Dendritic cell treated with granulocyte-macrophage colony-stimulating factor and Interleukin-4, amounts not matched to agents 40 ng/mL and 50 ng/mL, for 4 days (primary cell): ENCODE measurements at regions of chr3 and their contacts with region 1.

Region 1: GRCh38 chr3:141192345-141192744 is 39.3 kb upstream of the PXYLP1 start:
- H3K4me3 Mint-ChIP-seq: no peak overlapping the region
- H3K27ac Mint-ChIP-seq: no peak overlapping the region
- H3K4me1 Mint-ChIP-seq: peaks cover 10% of the 10 kb centered on the region
- H3K27me3 Mint-ChIP-seq: peaks cover 22% of the 10 kb centered on the region

Region 2: DNA sequence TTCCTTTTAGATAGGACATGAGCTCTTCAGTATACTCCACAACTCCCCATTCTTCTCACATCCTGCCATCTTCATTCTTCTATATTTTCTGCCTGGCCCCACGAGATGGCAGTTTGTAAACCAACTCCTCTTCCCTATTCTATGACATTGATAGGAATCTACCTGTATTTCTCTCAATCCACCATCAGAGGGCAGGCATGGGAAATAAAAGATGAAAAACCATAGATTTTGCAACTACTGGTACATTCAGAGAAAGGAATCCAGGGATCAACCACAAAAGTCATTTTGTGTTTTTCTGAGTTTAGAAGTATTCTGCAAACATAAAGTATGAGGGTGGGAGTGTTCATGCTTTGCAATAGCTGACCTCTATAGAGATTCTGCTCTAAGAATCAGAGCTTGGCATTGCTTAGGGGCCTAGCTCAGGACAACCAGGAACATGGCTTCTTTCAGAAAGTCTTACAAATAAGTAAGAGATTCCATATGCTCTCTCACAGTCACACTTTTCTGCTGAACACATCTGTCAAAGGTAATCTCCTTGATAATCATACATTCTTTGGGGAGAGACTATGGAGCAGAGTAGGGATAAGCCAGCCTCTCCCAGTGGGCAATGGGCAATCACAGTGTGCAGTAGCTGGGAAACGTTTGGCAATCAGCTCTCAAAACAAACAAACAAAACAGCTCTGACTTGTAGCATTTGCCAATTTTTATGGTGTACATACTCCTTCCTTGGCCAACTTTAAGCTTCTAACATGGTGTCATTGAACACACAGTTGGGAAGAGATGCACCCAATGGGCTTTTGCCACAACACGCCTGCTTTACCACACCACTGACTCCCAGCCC is 293.8 kb before region 1 on chr3:
- intact Hi-C with region 1: loop called (anchors 2 kb)
- H3K4me3 Mint-ChIP-seq: no peak overlapping the region
- H3K27ac Mint-ChIP-seq: no peak overlapping the region
- H3K4me1 Mint-ChIP-seq: peaks cover 4% of the 10 kb centered on the region
- H3K27me3 Mint-ChIP-seq: no peaks in the 10 kb centered on the region

Region 3: DNA sequence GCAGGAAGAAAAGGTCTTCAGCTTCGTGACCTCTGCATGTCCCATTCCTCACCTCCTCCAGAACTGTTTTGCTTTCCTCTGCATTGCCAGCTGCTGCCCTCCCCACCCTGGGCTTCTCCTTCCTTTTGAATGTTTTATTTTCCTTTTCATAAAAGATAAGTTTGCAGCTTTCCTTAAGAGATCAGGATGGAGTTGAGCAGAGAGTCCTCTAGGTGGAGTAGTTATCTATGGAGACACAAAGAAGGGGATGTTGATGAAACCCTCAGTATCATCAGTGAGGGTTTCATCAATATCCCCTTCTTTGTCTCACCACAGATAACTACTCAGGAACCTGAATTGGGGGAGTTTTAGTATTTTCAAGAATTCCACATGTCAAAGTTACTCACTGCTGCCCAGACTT is 269.7 kb before region 1 on chr3:
- intact Hi-C with region 1: loop called (anchors 10 kb)
- H3K4me3 Mint-ChIP-seq: no peak overlapping the region
- H3K27ac Mint-ChIP-seq: no peak overlapping the region
- H3K4me1 Mint-ChIP-seq: no peaks in the 10 kb centered on the region
- H3K27me3 Mint-ChIP-seq: no peaks in the 10 kb centered on the region

Region 4: GRCh38 chr3:141000027-141000663 is 192.2 kb before region 1 on chr3:
- intact Hi-C with region 1: loop called (anchors 1 kb)
- H3K4me3 Mint-ChIP-seq: no peak overlapping the region
- H3K27ac Mint-ChIP-seq: no peak overlapping the region
- H3K4me1 Mint-ChIP-seq: no peaks in the 10 kb centered on the region
- H3K27me3 Mint-ChIP-seq: no peaks in the 10 kb centered on the region

Region 5: GRCh38 chr3:141011232-141011996 is 180.9 kb before region 1 on chr3:
- intact Hi-C with region 1: loop called (anchors 1 kb)
- H3K4me3 Mint-ChIP-seq: no peak overlapping the region
- H3K27ac Mint-ChIP-seq: no peak overlapping the region
- H3K4me1 Mint-ChIP-seq: peaks cover 7% of the 10 kb centered on the region
- H3K27me3 Mint-ChIP-seq: peaks cover 5% of the 10 kb centered on the region

Region 6: GRCh38 chr3:141105828-141106628 is 86.3 kb before region 1 on chr3:
- intact Hi-C with region 1: loop called (anchors 5 kb)
- H3K4me3 Mint-ChIP-seq: no peak overlapping the region
- H3K27ac Mint-ChIP-seq: no peak overlapping the region
- H3K4me1 Mint-ChIP-seq: no peaks in the 10 kb centered on the region
- H3K27me3 Mint-ChIP-seq: no peaks in the 10 kb centered on the region

Region 7: GRCh38 chr3:141129541-141130011 is 62.8 kb before region 1 on chr3:
- intact Hi-C with region 1: no loop called
- H3K4me3 Mint-ChIP-seq: no peak overlapping the region
- H3K27ac Mint-ChIP-seq: no peak overlapping the region
- H3K4me1 Mint-ChIP-seq: no peaks in the 10 kb centered on the region
- H3K27me3 Mint-ChIP-seq: no peaks in the 10 kb centered on the region